Transverse colon (tissue), 4 donors: ENCODE measurements at regions of chr5 and their contacts with region 1.

Region 1: DNA sequence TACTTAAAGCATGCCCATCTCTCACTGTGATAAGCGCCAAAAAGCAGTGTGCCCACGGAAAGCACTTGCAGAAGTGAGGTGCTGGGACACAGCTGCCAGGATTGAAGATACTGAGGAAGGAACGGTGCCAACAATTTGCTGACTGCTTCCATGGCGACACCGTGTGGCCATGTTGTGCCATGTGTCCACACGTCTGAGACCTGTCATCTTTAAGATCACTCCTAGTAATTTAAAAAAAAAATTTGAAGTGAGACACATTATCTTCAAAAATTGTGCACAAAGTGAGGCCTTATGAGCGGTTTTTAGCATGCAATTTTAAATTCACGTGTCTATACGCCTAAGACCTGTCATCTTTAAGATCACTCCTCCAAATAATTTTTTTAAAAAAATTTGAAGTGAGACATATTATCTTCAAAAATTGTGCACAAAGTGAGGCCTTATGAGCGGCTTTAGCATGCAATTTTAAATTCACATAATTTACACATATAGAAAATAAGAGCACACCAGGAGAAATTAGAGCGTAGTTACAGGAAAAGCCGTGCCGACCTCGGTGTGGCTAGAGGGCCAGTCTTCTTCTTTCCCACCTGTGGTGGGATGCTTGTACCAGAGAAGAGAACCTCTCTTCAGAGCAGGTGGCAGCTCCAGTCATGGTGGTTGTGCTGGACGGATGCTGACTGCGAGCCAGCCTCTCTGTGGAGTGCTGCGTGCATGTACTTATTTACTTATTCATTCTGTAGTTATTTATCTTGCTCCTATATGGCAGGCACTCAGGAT is 21.4 kb upstream of the FLT4 start:
- DNase-seq: peak; percentile 22
- H3K4me3 ChIP-seq: no peak overlapping the region
- H3K27ac ChIP-seq: no peak overlapping the region
- H3K4me1 ChIP-seq: no peaks in the 10 kb centered on the region
- H3K27me3 ChIP-seq: peaks cover 36% of the 10 kb centered on the region
- CTCF ChIP-seq: peak in 4 of 5 experiments; percentile 29 to 54 (median 48)
- EP300 ChIP-seq: no peak
- POLR2A ChIP-seq: no peak

Region 2: GRCh38 chr5:179243333-179243732 is 1427.4 kb before region 1 on chr5:
- in situ Hi-C with region 1: no loop called
- intact Hi-C with region 1: loop called (anchors 10 kb)
- DNase-seq: peak; percentile 4
- H3K4me3 ChIP-seq: no peak overlapping the region
- H3K27ac ChIP-seq: peak overlapping the region in 3 of 4 donors; percentile 16 to 32 (median 18)
- H3K4me1 ChIP-seq: peaks cover 0 to 2% (median 0%) of the 10 kb centered on the region in 4 donors
- H3K27me3 ChIP-seq: no peaks in the 10 kb centered on the region
- CTCF ChIP-seq: no peak
- EP300 ChIP-seq: no peak
- POLR2A ChIP-seq: no peak

Region 3: GRCh38 chr5:180172450-180173197 is 498.1 kb before region 1 on chr5:
- in situ Hi-C with region 1: no loop called
- intact Hi-C with region 1: no loop called
- DNase-seq: no peak
- H3K4me3 ChIP-seq: no peak overlapping the region
- H3K27ac ChIP-seq: peak overlapping the region in 1 of 4 donors; percentile 51
- H3K4me1 ChIP-seq: no peaks in the 10 kb centered on the region
- H3K27me3 ChIP-seq: peaks cover 8% of the 10 kb centered on the region
- CTCF ChIP-seq: no peak
- EP300 ChIP-seq: no peak
- POLR2A ChIP-seq: no peak

Region 4: GRCh38 chr5:180395540-180396274 is 275.1 kb before region 1 on chr5:
- in situ Hi-C with region 1: no loop called
- intact Hi-C with region 1: no loop called
- DNase-seq: no peak
- H3K4me3 ChIP-seq: no peak overlapping the region
- H3K27ac ChIP-seq: no peak overlapping the region
- H3K4me1 ChIP-seq: no peaks in the 10 kb centered on the region
- H3K27me3 ChIP-seq: no peaks in the 10 kb centered on the region
- CTCF ChIP-seq: no peak
- EP300 ChIP-seq: no peak
- POLR2A ChIP-seq: no peak

Region 5: DNA sequence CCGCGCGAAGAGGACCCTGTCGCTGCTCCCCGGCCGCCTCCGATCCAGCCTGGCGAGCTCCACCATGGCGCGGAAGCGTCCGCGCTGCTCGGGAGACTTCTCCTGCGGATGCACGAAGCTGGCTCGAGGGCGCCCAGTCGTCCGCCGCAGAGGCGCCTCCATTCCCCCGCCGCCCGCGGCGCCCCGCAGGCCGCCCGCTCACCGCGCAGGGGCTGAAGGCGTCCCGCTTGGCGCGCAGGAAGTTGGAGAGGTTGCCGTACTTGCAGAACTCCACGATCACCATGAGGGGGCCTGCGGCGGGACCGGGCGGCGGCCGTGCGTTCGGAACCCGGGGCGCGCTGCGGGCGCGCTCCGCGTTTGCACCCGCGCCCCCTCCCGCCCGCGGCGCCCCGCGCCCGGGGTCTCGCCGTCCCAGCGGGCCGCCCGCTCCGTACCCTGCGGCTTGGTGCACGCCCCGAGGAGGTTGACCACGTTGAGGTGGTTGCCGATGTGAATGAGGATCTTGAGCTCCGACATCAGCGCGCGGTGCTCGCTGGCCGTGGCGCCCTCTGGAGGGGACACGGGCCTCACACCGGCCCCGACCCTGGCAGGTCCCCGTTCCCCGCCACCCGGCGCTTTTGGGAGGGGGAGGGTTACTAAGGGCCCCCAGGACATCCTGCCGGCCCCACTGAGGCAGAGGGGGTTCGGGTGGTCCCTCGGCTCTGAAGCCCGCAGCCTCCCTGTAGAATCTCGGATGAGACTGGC is 51.8 kb before region 1 on chr5:
- in situ Hi-C with region 1: no loop called
- intact Hi-C with region 1: no loop called
- DNase-seq: no peak
- H3K4me3 ChIP-seq: peak overlapping the region in 2 of 4 donors; percentile 27 to 36
- H3K27ac ChIP-seq: no peak overlapping the region
- H3K4me1 ChIP-seq: peaks cover 0 to 4% (median 2%) of the 10 kb centered on the region in 4 donors
- H3K27me3 ChIP-seq: peaks cover 21% of the 10 kb centered on the region
- CTCF ChIP-seq: no peak
- EP300 ChIP-seq: no peak
- POLR2A ChIP-seq: no peak